ENCODE measurements at regions of chr10 and their contacts with region 1.

Region 1: DNA sequence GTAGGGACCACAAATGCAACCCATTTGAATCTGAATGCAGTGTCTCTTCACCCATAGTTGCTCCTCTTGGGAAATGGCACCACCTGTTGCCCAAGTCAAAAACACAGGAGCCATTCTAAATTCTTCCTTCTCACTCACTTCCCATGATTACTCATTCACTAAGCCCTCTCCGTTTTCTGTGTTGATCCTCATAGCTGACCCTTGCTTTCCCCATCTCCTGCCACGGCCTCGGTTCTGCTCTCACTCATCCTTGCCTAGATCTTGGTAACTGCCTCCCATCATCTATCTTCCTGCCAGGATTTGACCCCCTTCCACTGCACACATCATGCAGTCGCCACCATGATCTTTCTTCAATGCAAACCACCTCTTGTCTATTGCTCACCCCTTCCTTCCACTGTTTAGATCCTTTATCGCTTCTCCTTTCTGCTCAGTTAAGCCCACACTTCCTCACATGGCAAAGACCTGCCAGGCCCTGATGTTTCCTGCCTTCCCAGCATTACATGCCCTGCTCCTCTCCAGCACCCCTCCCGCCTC is 19.0 kb upstream of the CPN1 start:
- DNase-seq: peak in 1 of 2 experiments; percentile 58
- H3K4me3 ChIP-seq: no peak overlapping the region
- H3K4me3 Mint-ChIP-seq: no peak overlapping the region
- H3K27ac Mint-ChIP-seq: no peak overlapping the region
- H3K4me1 ChIP-seq: peaks cover 19% of the 10 kb centered on the region
- H3K4me1 Mint-ChIP-seq: peaks cover 19% of the 10 kb centered on the region
- H3K27me3 ChIP-seq: no peaks in the 10 kb centered on the region
- H3K27me3 Mint-ChIP-seq: no peaks in the 10 kb centered on the region
- CTCF ChIP-seq: peak; percentile 40 to 72

Region 2: DNA sequence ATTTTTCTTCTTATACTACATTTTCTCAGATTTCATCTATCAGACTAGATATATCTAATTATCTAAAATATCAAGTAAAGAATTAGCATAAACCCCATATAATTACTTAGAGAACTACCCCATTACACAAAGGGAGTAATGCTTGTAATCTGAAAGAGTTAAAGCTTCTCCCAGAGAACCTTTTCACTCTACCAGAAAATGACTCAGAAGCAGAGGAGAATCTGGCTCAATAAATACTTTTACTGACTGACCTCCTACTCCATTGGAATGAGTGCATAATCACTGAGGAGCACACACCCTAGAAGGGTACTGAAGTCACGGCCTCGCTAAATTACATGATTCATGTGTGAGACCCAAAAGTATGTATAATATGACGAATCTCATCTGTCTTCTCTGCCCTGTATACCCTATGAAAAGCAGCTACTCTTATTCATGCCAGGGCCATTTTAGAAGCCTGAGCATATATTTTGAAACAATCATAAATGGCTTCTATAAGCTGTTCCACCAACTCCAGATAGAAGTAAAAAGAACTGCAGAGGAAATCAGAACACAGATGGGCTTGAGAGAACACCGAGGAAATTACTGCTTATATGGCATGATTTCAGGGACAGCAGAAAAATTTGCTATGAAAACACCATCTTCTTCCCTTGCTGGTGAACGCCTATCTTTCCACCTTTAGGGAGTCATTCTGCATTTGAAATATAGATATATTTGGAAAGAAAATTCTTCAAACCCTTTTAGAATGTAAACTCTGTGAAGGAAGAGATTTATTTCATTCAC is 123.6 kb before region 1 on chr10:
- CTCF ChIA-PET with region 1: no interaction called
- POLR2A ChIA-PET with region 1: no interaction called
- intact Hi-C with region 1: loop called (anchors 2 kb)
- DNase-seq: peak in 1 of 2 experiments; percentile 14
- H3K4me3 ChIP-seq: no peak overlapping the region
- H3K4me3 Mint-ChIP-seq: no peak overlapping the region
- H3K27ac Mint-ChIP-seq: peak overlapping the region; percentile 33
- H3K4me1 ChIP-seq: peaks cover 28% of the 10 kb centered on the region; the same call in 1 of the 2 replicates
- H3K4me1 Mint-ChIP-seq: peaks cover 11% of the 10 kb centered on the region
- H3K27me3 ChIP-seq: no peaks in the 10 kb centered on the region
- H3K27me3 Mint-ChIP-seq: no peaks in the 10 kb centered on the region
- CTCF ChIP-seq: no peak

Region 3: DNA sequence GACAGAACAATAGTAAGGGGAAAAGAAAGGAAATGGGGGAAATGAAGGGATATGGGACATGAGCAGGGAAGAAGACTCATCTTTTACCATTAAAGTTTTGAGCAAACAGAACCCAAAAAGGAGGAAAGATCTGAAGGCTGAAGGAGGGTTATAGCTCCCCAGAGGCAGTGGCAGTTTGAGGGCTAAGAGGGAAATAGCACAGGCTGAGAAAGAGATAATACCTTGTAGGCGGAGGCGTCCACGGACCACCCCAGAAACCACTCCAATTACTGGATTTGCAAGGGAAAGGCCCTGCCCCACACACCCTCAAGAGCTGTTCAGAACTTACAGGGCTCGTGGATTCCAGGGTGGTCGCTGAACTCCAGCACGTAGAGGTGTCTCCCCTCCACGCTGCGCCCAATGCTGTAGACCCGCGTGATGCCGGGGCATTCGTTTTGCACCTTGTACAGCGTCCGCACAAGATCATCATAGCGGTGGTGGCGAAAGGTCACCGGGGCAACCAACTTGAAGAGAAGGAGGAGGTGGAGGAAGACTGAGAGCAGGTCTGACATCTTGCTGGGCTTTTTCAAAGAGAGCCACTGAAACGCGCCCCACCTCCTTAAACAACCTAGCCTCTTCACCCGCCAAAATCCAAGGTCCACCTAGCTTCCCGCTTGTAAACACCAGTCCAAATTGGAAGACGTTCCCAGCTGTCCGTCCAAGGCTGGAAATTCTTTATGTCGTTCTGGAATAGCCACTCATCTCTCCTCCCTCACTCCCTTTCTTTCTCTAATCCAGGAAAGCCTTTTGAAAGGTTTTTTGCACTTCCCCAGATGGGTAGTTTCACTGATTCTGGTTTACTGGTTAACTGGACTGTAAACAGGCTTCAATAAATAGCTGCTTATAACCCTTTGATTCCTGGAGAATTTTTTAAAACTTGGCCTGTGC is 19.4 kb before region 1 on chr10 and contains the start of gene CPN1:
- CTCF ChIA-PET with region 1: no interaction called
- POLR2A ChIA-PET with region 1: no interaction called
- intact Hi-C with region 1: loop called (anchors 1 kb)
- DNase-seq: peak; percentile 48 to 51
- H3K4me3 ChIP-seq: peak within 1 kb of the TSS; percentile 51
- H3K4me3 Mint-ChIP-seq: peak within 1 kb of the TSS; percentile 70
- H3K27ac Mint-ChIP-seq: peak within 1 kb of the TSS; percentile 14
- H3K4me1 ChIP-seq: peaks cover 28% of the 10 kb centered on the region
- H3K4me1 Mint-ChIP-seq: peaks cover 29% of the 10 kb centered on the region
- H3K27me3 ChIP-seq: no peaks in the 10 kb centered on the region
- H3K27me3 Mint-ChIP-seq: no peaks in the 10 kb centered on the region
- CTCF ChIP-seq: no peak
- total RNA-seq, gene CPN1: 24.3 and 24.9 TPM in 2 replicates

Measured in Caco-2 (cell line).